ENCODE measurements at regions of chr5 and their contacts with region 1.

Region 1: DNA sequence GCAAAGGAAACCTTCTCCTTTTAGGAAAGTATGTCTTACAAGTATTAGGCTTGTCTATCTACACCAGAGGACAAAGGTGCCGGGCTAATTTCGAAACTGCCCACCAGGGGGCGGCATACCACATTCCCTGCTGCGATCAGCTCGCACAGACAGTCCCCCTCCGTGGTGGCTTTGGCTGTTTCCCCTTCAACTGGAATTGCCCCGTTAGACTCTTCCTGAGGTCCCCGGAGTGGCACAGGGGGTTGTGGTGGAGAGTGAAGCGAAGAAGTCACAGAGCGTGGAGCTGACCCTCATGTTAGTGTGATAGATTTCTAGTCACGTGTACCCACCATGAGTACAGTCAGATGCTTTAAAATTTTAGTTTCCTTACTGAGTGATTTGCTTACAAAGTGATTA is 17.5 kb downstream of the PTTG1 start:
- H3K4me3 Mint-ChIP-seq: peak overlapping the region; percentile 75
- H3K27ac Mint-ChIP-seq: peak overlapping the region; percentile 77
- H3K4me1 Mint-ChIP-seq: peaks cover 58% of the 10 kb centered on the region
- H3K27me3 Mint-ChIP-seq: no peaks in the 10 kb centered on the region

Region 2: DNA sequence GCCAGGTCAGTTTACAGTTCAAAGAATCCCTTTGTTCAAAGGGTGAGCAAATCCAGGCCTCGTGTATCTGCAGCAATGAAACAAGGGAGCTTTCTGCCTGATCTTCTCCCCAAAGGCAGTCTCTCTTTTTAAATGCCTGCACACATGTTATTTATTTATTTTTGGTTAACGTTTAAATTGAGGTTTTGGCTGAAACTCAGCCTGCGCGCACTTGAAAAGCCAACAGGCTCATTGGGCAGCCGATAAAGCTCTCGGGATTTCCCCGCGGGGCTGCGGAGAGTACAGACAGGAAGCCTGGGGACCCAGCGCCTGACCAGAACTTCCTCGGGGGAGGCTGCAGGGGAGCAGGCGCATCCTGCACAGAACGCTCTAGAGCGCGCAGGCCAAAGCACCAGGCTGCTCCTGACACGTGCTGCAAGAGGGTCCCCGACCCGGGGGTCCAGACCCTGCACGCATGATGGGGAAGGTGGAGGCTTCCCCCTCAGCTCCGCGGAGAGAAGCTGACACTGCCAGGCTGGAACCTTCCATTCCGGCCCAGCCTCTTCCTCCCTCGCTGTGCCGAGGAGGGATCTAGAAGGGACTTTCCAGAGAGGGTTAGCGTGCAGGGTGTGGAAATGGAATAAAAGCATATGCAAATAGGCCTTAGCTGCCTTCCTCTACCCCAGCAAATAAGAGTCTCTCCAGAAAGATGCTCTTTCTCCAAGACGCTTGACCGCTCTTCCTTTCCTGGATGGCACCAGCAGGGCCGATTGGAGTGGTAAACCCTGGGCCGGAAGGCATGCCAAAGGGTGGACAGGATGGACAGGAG is 28.6 kb after region 1 on chr5:
- intact Hi-C with region 1: loop called (anchors 2 kb)
- H3K4me3 Mint-ChIP-seq: peak overlapping the region; percentile 92
- H3K27ac Mint-ChIP-seq: peak overlapping the region; percentile 86
- H3K4me1 Mint-ChIP-seq: peaks cover 46% of the 10 kb centered on the region
- H3K27me3 Mint-ChIP-seq: peaks cover 2% of the 10 kb centered on the region

Region 3: DNA sequence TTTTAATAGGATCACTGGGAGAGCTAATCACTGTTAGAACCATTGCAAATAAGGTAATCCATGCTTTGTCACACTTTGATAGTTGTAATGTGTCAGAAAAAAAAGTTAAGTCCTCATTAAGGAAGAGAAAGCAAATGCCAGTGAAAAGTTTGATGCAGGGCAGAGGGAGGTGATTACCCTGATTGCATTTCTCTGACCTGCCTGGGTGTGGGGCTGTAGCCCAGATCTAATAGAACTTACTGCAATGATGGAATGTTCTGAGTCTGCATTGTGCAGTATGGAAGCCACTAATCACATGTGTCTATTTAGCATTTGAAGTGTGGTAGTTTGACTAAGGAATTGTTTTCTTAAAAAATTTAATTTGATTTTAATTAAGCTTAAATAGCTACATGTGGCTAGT is 210.1 kb after region 1 on chr5:
- intact Hi-C with region 1: loop called (anchors 10 kb)
- H3K4me3 Mint-ChIP-seq: no peak overlapping the region
- H3K27ac Mint-ChIP-seq: no peak overlapping the region
- H3K4me1 Mint-ChIP-seq: peaks cover 8% of the 10 kb centered on the region
- H3K27me3 Mint-ChIP-seq: peaks cover 4% of the 10 kb centered on the region

Region 4: DNA sequence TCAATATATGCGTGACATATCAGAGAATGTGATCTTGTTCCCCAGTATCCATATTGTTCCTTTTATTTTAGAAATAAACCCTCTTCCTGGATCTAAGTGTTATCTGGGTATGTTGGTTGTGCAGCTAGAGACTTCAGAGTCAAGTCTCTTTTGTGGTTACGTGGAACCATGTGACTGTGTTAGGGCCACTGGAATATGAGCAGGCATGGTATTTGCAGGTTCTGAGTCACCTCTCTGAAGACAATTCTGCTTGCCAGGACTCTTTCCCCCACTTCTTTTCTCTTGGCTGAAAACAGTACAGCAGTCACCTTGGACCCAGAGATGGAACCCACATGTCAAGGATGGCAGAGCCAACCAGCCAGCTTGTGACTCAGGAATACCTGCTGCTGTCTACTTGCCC is 353.1 kb after region 1 on chr5:
- intact Hi-C with region 1: no loop called
- H3K4me3 Mint-ChIP-seq: no peak overlapping the region
- H3K27ac Mint-ChIP-seq: no peak overlapping the region
- H3K4me1 Mint-ChIP-seq: peaks cover 6% of the 10 kb centered on the region
- H3K27me3 Mint-ChIP-seq: no peaks in the 10 kb centered on the region

Region 5: DNA sequence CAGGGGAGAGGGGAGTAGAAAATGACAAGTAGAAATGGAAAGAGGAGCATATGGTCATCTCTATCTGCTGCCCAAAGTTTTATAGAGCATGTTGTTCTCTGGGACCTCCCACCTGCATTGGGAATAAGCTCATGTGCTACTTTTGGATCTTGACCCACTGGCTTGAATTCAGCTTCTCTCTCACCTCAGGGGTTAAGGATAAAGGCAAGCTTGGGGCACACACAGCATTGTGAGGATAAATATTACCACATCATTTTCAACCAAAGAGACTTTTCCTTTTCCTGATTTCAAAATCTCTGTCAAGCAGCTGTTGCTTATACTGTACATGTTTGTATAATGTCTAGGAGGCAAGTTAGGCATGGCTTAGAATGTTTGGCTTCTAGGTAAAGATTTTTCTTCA is 396.2 kb after region 1 on chr5:
- intact Hi-C with region 1: loop called (anchors 10 kb)
- H3K4me3 Mint-ChIP-seq: no peak overlapping the region
- H3K27ac Mint-ChIP-seq: no peak overlapping the region
- H3K4me1 Mint-ChIP-seq: peaks cover 20% of the 10 kb centered on the region
- H3K27me3 Mint-ChIP-seq: no peaks in the 10 kb centered on the region

Measured in dendritic cell treated with granulocyte-macrophage colony-stimulating factor and Interleukin-4, amounts not matched to agents 40 ng/mL and 50 ng/mL, for 4 days (primary cell).